Naive thymus-derived CD4-positive, alpha-beta T cell (primary cell): ENCODE measurements at regions of chr18 and their contacts with region 1.

Region 1: DNA sequence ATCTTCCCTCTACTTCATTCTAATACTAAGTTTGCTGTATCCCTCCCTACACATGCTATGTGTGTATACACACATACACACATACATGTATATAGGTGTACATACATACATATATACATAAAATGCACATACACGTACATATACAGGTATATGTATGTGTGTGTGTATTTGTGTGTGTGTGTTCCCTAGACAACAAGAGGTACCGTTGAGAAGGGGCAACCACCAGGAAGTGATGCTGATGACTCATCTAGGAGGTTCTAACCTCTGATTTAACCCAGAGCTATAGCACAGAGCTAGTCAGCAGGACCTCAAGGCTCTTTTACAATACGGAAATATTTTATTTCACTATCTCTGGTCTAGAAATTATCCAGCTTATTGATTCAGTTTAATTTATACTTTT is 139.2 kb downstream of the LAMA3 start:
- DNase-seq: peak in 7 of 9 donors; percentile 13 to 74 (median 57)
- ATAC-seq: peak; percentile 99
- H3K4me3 ChIP-seq: no peak overlapping the region
- H3K4me3 Mint-ChIP-seq: peak overlapping the region in 1 of 10 donors; percentile 47
- H3K27ac ChIP-seq: no peak overlapping the region
- H3K27ac Mint-ChIP-seq: peak overlapping the region in 7 of 9 donors; percentile 2 to 86 (median 55)
- H3K4me1 ChIP-seq: peaks cover 0 to 10% of the 10 kb centered on the region in 2 donors
- H3K4me1 Mint-ChIP-seq: peaks cover 0 to 40% (median 23%) of the 10 kb centered on the region in 7 donors
- H3K27me3 ChIP-seq: no peaks in the 10 kb centered on the region
- H3K27me3 Mint-ChIP-seq: no peaks in the 10 kb centered on the region

Region 2: DNA sequence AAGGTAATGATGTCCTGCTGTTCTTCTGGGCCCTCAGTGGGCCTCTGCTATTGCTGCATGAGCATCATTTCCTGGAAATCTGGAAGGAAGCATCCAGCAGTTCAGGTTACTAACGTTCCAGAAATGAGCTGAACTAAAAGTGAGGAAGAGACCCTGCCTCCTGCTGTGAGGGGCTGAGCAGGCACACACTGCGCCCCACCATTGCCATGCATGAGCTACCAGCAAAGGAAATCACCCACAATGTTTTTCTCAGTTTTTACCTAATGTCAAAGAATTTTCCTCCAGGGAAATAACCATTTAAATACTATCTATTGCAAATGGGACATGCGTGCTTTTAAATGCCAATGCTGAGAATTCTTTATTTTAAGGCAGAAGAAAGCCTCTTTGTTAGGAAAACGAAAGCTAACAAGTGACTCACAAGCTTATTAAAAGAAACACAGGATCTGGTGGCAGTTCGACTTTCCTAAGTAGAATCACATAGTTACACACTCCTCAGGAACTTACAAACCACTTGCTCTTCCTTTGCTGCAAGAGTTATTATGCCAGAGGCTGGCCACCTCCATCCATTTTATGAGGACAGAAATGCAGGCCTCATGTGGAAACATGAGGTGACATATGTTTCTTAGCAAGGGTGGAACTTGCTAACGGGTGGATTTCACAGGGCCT is 33.5 kb after region 1 on chr18:
- CTCF ChIA-PET with region 1: no interaction called
- POLR2A ChIA-PET with region 1: interaction called, 3 read pairs
- intact Hi-C with region 1: loop called in 1 of 2 experiments (anchors 1 kb)
- DNase-seq: no peak
- ATAC-seq: no peak
- H3K4me3 ChIP-seq: no peak overlapping the region
- H3K4me3 Mint-ChIP-seq: no peak overlapping the region
- H3K27ac ChIP-seq: no peak overlapping the region
- H3K27ac Mint-ChIP-seq: peak overlapping the region in 8 of 9 donors; percentile 13 to 73 (median 60)
- H3K4me1 ChIP-seq: peaks cover 24 to 25% of the 10 kb centered on the region in 2 donors
- H3K4me1 Mint-ChIP-seq: peaks cover 26 to 58% (median 45%) of the 10 kb centered on the region in 7 donors
- H3K27me3 ChIP-seq: no peaks in the 10 kb centered on the region
- H3K27me3 Mint-ChIP-seq: no peaks in the 10 kb centered on the region

Region 3: DNA sequence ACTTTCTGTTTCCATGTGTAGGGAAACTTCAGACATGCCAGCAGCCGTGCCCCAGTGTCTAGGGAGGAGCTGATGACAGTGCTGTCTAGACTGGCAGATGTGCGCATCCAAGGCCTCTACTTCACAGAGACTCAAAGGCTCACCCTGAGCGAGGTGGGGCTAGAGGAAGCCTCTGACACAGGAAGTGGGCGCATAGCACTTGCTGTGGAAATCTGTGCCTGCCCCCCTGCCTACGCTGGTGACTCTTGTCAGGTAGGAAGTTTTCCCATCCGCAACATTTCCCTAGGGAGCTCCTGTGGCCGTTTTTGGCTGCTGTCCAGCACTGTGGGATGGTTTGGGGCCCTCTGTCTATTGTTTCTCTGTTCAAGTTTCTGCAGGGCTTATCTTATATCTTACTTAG is 43.0 kb after region 1 on chr18:
- CTCF ChIA-PET with region 1: interaction called, 4 read pairs
- POLR2A ChIA-PET with region 1: no interaction called
- intact Hi-C with region 1: loop called in 1 of 2 experiments (anchors 1 kb)
- DNase-seq: peak; percentile 30 to 86 (median 80)
- ATAC-seq: peak; percentile 99
- H3K4me3 ChIP-seq: no peak overlapping the region
- H3K4me3 Mint-ChIP-seq: peak overlapping the region; percentile 56 to 82 (median 74)
- H3K27ac ChIP-seq: peak overlapping the region; percentile 25
- H3K27ac Mint-ChIP-seq: peak overlapping the region; percentile 26 to 99 (median 95)
- H3K4me1 ChIP-seq: peaks cover 38 to 52% of the 10 kb centered on the region in 2 donors
- H3K4me1 Mint-ChIP-seq: peaks cover 26 to 59% (median 47%) of the 10 kb centered on the region in 7 donors
- H3K27me3 ChIP-seq: no peaks in the 10 kb centered on the region
- H3K27me3 Mint-ChIP-seq: peaks cover 0 to 32% (median 0%) of the 10 kb centered on the region in 5 donors

Region 4: DNA sequence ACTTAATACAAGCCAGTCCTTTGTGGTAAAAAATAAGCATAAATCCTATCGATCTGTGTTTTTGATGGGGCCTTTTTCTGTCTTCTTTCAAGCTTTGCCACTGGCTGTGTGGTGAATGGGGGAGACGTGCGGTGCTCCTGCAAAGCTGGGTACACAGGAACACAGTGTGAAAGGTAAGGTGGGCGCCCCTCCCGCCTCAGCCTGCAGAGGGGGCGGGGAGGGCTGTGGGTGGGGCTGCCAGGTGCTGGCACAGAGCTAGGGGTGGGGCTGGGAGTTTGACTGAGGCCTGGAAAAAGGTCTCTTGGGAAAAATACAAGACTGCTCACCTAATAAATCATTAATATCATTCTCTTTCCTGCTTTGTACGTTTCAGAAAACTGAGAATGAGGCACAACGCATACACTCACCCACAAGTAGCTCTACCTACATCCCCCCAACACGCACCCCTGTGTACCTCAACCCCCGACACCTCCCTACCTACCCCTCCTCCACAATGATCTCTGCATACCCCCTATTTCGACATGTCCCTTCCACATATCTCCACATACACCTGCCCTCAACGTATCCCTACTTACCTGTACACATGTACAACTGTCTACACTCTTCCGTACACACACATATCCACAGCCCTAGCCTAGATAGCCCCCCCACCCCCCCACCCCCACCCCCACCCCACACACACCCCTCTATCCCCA is 56.4 kb after region 1 on chr18:
- CTCF ChIA-PET with region 1: no interaction called
- POLR2A ChIA-PET with region 1: no interaction called
- intact Hi-C with region 1: loop called in 1 of 2 experiments (anchors 1 kb)
- DNase-seq: no peak
- ATAC-seq: no peak
- H3K4me3 ChIP-seq: no peak overlapping the region
- H3K4me3 Mint-ChIP-seq: peak overlapping the region in 5 of 10 donors; percentile 43 to 71 (median 55)
- H3K27ac ChIP-seq: no peak overlapping the region
- H3K27ac Mint-ChIP-seq: peak overlapping the region in 6 of 9 donors; percentile 31 to 75 (median 47)
- H3K4me1 ChIP-seq: peaks cover 0 to 11% of the 10 kb centered on the region in 2 donors
- H3K4me1 Mint-ChIP-seq: peaks cover 17 to 44% (median 30%) of the 10 kb centered on the region in 7 donors
- H3K27me3 ChIP-seq: no peaks in the 10 kb centered on the region
- H3K27me3 Mint-ChIP-seq: peaks cover 0 to 2% (median 0%) of the 10 kb centered on the region in 5 donors

Region 5: DNA sequence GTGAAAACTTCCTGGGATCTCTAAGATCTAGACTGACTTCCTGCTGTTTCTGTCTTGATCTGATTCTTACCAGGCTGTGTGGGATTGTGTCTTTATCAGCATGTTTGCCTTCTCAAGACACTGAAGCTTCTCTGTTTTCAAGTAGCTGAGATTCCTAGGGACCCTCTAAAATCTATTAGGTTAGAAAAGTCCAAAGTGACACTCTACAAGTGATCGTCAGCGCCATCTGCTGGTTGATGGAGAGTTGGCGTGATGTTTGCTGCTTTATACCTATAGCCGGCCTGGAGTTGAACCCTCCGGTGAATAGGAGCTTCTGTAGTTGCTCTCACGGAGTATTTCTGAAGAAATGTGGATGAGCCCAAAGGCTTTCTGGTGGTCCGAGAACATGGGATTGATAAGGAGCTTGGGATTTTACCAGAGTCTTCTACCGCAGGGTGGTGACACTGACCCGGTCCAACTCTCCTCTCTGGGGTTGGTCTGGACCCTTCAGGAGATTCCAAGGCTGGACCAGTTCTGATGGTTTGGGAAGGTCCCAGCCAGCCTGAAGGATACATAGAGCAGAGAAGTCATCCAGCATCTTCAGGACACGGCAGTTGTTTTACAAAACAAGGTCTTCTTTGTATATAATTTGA is 90.1 kb after region 1 on chr18:
- CTCF ChIA-PET with region 1: interaction called, 3 read pairs
- POLR2A ChIA-PET with region 1: no interaction called
- intact Hi-C with region 1: loop called (anchors 1 kb)
- DNase-seq: peak; percentile 47 to 74 (median 61)
- ATAC-seq: peak; percentile 87
- H3K4me3 ChIP-seq: no peak overlapping the region
- H3K4me3 Mint-ChIP-seq: no peak overlapping the region
- H3K27ac ChIP-seq: no peak overlapping the region
- H3K27ac Mint-ChIP-seq: peak overlapping the region in 3 of 9 donors; percentile 20 to 63 (median 62)
- H3K4me1 ChIP-seq: peaks cover 8 to 15% of the 10 kb centered on the region in 2 donors
- H3K4me1 Mint-ChIP-seq: peaks cover 10 to 31% (median 25%) of the 10 kb centered on the region in 7 donors
- H3K27me3 ChIP-seq: no peaks in the 10 kb centered on the region
- H3K27me3 Mint-ChIP-seq: peaks cover 0 to 27% (median 5%) of the 10 kb centered on the region in 5 donors

Region 6: GRCh38 chr18:24019641-24020331 is 191.4 kb after region 1 on chr18:
- CTCF ChIA-PET with region 1: no interaction called
- POLR2A ChIA-PET with region 1: no interaction called
- intact Hi-C with region 1: loop called in 1 of 2 experiments (anchors 2 kb)
- DNase-seq: peak in 8 of 9 donors; percentile 53 to 74 (median 62)
- ATAC-seq: peak; percentile 76
- H3K4me3 ChIP-seq: peak overlapping the region; percentile 32
- H3K4me3 Mint-ChIP-seq: peak overlapping the region; percentile 63 to 97 (median 80)
- H3K27ac ChIP-seq: peak overlapping the region; percentile 53
- H3K27ac Mint-ChIP-seq: peak overlapping the region; percentile 75 to 97 (median 93)
- H3K4me1 ChIP-seq: peaks cover 79 to 84% of the 10 kb centered on the region in 2 donors
- H3K4me1 Mint-ChIP-seq: peaks cover 76 to 93% (median 86%) of the 10 kb centered on the region in 7 donors
- H3K27me3 ChIP-seq: no peaks in the 10 kb centered on the region
- H3K27me3 Mint-ChIP-seq: no peaks in the 10 kb centered on the region

Region 7: DNA sequence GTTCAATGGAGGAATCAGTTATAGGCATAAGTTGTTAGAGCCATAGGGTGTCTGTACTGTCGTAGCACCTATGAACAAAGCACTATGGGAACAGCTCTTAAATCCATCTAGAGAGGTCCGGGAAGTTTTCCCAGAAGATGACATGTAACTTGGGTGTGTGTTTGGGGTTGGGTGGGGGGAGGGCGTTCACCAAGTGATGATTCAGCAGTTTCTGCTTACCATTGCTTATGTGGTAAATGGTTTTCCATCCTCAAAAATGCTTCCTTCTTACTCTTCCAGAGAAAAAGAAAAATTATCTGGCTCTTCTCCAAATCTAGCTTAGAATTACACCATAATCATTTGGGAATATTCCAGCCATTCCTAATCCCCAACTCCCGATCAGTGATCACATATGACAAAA is 1884.7 kb after region 1 on chr18:
- CTCF ChIA-PET with region 1: no interaction called
- POLR2A ChIA-PET with region 1: no interaction called
- intact Hi-C with region 1: no loop called
- DNase-seq: no peak
- ATAC-seq: no peak
- H3K4me3 ChIP-seq: no peak overlapping the region
- H3K4me3 Mint-ChIP-seq: no peak overlapping the region
- H3K27ac ChIP-seq: no peak overlapping the region
- H3K27ac Mint-ChIP-seq: no peak overlapping the region
- H3K4me1 ChIP-seq: no peaks in the 10 kb centered on the region
- H3K4me1 Mint-ChIP-seq: no peaks in the 10 kb centered on the region
- H3K27me3 ChIP-seq: no peaks in the 10 kb centered on the region
- H3K27me3 Mint-ChIP-seq: peaks cover 0 to 49% (median 22%) of the 10 kb centered on the region in 5 donors